PC-9 (cell line): ENCODE measurements at regions of chr14 and their contacts with region 1.

Region 1: DNA sequence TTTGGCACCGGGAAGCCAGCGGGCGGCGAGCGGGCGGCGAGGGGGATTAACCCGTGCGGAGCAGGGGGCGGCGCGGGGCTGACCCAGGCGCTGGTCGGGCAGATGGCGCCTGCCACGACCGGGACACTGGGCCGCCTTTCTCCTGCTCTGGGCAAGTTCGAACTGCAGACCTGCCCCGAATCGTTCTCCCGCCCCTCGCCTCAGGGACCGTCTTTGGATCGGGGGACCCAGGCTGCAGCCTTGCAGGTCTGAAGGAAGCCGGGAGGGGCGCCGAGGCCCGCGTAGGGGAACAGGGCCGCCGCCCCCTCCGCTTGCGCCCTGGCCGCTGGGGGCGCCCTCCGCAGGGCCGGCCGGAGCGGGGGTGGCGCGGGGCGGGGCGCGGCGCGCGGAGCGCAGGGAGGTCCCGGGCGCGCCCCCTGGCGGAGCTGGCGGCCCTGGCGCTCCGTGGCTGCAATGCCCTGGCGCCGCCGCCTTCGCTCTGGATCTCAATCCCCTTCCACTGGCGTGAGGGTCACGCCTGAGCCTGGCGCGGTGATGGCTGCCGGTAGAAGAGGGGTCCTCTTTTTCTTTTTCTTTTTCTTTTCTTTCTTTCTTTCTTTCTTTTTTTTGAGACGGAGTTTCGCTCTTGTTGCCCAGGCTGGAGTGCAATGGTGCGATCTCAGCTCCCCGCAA is 449 bp upstream of the LTBP2 start:
- DNase-seq: peak; percentile 57 to 99
- H3K4me3 ChIP-seq: peak overlapping the region; percentile 76
- H3K27ac ChIP-seq: no peak overlapping the region
- H3K4me1 ChIP-seq: peaks cover 63% of the 10 kb centered on the region
- H3K27me3 ChIP-seq: no peaks in the 10 kb centered on the region
- CTCF ChIP-seq: peak; percentile 72

Region 2: GRCh38 chr14:74362361-74362915 is 250.0 kb before region 1 on chr14:
- CTCF ChIA-PET with region 1: interaction called, 5 read pairs
- POLR2A ChIA-PET with region 1: no interaction called
- intact Hi-C with region 1: loop called (anchors 1 kb)
- DNase-seq: peak; percentile 72 to 92
- H3K4me3 ChIP-seq: no peak overlapping the region
- H3K27ac ChIP-seq: no peak overlapping the region
- H3K4me1 ChIP-seq: no peaks in the 10 kb centered on the region
- H3K27me3 ChIP-seq: no peaks in the 10 kb centered on the region
- CTCF ChIP-seq: peak; percentile 100

Region 3: GRCh38 chr14:74566174-74567125 is 46.0 kb before region 1 on chr14:
- CTCF ChIA-PET with region 1: interaction called, 82 read pairs
- POLR2A ChIA-PET with region 1: interaction called, 13 read pairs
- intact Hi-C with region 1: no loop called
- DNase-seq: peak; percentile 100
- H3K4me3 ChIP-seq: peak overlapping the region; percentile 43; the same call in 1 of the 2 replicates
- H3K27ac ChIP-seq: peak overlapping the region; percentile 98
- H3K4me1 ChIP-seq: peaks cover 95% of the 10 kb centered on the region
- H3K27me3 ChIP-seq: no peaks in the 10 kb centered on the region
- CTCF ChIP-seq: 0 out of 2 replicates have a peak, but pooled peaks have one; percentile 10

Region 4: GRCh38 chr14:74712499-74713394 is 100.3 kb after region 1 on chr14 and contains the starts of genes AREL1 and FCF1:
- CTCF ChIA-PET with region 1: interaction called, 14 read pairs
- POLR2A ChIA-PET with region 1: interaction called, 3 read pairs
- intact Hi-C with region 1: loop called (anchors 1 kb)
- DNase-seq: peak; percentile 86 to 92
- H3K4me3 ChIP-seq: peak within 1 kb of the TSS; percentile 67
- H3K27ac ChIP-seq: peak within 1 kb of the TSS; percentile 27; the same call in 1 of the 2 replicates
- H3K4me1 ChIP-seq: peaks cover 21% of the 10 kb centered on the region
- H3K27me3 ChIP-seq: no peaks in the 10 kb centered on the region
- CTCF ChIP-seq: no peak
- total RNA-seq, gene AREL1: 98.4 and 108 TPM in 2 replicates
- total RNA-seq, gene FCF1: 175 and 191 TPM in 2 replicates

Region 5: DNA sequence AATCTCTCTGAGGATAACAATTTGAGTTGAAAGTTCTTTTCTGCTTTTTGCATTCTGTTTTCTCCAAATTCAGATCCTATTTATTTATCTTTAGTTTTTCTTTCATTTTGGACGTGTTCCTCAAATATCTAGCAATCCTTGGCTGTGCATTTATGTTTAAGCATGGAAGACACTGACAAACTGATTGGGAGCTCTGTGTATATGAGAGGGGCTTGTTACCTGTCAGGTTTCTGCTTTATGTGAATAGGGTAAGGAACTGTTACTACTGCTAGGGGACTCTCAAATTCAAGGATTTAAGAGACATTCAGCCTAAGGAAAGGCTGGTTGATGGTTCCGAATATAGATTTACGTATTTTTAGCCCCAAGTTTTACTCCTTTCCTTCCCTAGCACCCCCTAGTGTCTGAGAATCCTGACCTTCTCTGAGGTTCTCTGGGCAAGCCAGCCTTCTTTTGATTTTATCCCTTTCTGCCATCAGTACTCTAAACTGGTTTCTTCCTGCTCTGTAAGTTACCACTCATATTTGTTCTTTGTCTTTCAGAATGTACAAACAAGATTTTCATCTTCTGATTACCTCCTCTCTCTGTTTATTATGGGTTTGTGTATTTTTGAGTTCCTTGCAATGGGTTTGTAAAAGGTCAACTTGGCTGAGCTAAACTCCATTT is 181.2 kb after region 1 on chr14:
- CTCF ChIA-PET with region 1: no interaction called
- POLR2A ChIA-PET with region 1: interaction called, 4 read pairs
- intact Hi-C with region 1: loop called (anchors 1 kb)
- DNase-seq: no peak
- H3K4me3 ChIP-seq: no peak overlapping the region
- H3K27ac ChIP-seq: no peak overlapping the region
- H3K4me1 ChIP-seq: no peaks in the 10 kb centered on the region
- H3K27me3 ChIP-seq: no peaks in the 10 kb centered on the region
- CTCF ChIP-seq: peak; percentile 58; the same call in 1 of the 2 replicates

Region 6: GRCh38 chr14:74881431-74882361 is 269.2 kb after region 1 on chr14 and contains the start of gene DLST:
- CTCF ChIA-PET with region 1: interaction called, 6 read pairs
- POLR2A ChIA-PET with region 1: no interaction called
- intact Hi-C with region 1: loop called (anchors 5 kb)
- DNase-seq: peak; percentile 78 to 99
- H3K4me3 ChIP-seq: peak within 1 kb of the TSS; percentile 75
- H3K27ac ChIP-seq: peak within 1 kb of the TSS; percentile 17
- H3K4me1 ChIP-seq: peaks cover 49% of the 10 kb centered on the region
- H3K27me3 ChIP-seq: no peaks in the 10 kb centered on the region
- CTCF ChIP-seq: no peak
- total RNA-seq, gene DLST: 309 and 320 TPM in 2 replicates